Activated CD8-positive, alpha-beta T cell treated with anti-CD3 and anti-CD28 coated beads, Interleukin-2, amount 10 ng/mL, durations not matched to agents 7 days and 5 days (primary cell): ENCODE measurements at regions of chr9 and their contacts with region 1.

Region 1: GRCh38 chr9:124537926-124538325 is 30.7 kb upstream of the NR5A1 start:
- DNase-seq: no peak
- ATAC-seq: no peak
- H3K4me3 Mint-ChIP-seq: no peak overlapping the region
- H3K27ac Mint-ChIP-seq: no peak overlapping the region
- H3K4me1 Mint-ChIP-seq: no peaks in the 10 kb centered on the region
- H3K27me3 Mint-ChIP-seq: peaks cover 10% of the 10 kb centered on the region

Region 2: GRCh38 chr9:124420991-124421543 is 116.9 kb before region 1 on chr9:
- CTCF ChIA-PET with region 1: interaction called, 60 read pairs
- POLR2A ChIA-PET with region 1: no interaction called
- DNase-seq: peak; percentile 30
- ATAC-seq: peak; percentile 31
- H3K4me3 Mint-ChIP-seq: no peak overlapping the region
- H3K27ac Mint-ChIP-seq: no peak overlapping the region
- H3K4me1 Mint-ChIP-seq: peaks cover 13% of the 10 kb centered on the region
- H3K27me3 Mint-ChIP-seq: peaks cover 3% of the 10 kb centered on the region

Region 3: DNA sequence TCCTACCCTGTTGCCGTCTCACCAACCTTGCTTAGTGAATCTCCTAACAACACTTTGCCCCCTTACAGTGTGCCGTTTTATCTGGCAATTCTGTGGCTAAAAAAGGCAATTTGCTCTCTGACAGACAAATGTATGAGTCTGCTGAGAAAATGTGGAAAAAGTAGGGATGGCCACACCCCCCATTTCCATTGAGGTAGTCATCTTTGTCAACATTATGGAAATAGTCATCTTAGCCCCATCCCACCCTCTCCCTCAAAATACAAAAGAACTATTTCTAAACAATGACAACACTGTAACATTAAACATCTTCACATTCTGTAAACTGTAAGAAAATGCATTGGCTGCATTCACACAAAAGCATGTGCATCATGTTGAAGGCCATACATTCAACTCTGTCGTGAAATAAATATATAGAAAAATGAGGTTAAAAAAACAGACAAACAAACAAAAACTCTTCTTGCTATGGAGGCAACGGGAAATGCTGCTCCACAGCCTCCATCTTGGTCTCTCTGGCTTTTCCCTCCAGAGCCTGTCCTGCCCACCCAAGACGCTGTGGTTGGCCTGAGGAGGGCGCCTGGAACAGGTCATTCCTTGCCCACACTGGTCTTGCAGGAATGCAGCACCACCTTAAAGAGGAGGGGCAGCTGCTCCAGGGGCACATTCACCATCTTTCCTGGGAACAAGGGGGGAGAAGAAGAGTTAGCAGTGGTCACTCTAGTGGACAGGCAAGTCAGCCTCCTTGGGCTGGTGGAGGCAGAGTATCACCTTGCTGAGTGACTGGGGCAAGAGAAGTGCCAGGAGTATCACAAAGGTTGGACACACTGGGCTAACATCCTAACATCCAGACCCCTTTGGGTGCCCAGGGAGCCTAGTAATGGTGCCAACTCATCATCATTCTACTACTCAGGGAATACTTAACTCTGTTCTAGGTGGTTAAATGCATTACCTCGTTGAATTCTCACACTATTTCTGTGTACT is 15.5 kb before region 1 on chr9:
- CTCF ChIA-PET with region 1: interaction called, 15 read pairs
- POLR2A ChIA-PET with region 1: no interaction called
- DNase-seq: no peak
- ATAC-seq: no peak
- H3K4me3 Mint-ChIP-seq: no peak overlapping the region
- H3K27ac Mint-ChIP-seq: no peak overlapping the region
- H3K4me1 Mint-ChIP-seq: no peaks in the 10 kb centered on the region
- H3K27me3 Mint-ChIP-seq: peaks cover 7% of the 10 kb centered on the region

Region 4: DNA sequence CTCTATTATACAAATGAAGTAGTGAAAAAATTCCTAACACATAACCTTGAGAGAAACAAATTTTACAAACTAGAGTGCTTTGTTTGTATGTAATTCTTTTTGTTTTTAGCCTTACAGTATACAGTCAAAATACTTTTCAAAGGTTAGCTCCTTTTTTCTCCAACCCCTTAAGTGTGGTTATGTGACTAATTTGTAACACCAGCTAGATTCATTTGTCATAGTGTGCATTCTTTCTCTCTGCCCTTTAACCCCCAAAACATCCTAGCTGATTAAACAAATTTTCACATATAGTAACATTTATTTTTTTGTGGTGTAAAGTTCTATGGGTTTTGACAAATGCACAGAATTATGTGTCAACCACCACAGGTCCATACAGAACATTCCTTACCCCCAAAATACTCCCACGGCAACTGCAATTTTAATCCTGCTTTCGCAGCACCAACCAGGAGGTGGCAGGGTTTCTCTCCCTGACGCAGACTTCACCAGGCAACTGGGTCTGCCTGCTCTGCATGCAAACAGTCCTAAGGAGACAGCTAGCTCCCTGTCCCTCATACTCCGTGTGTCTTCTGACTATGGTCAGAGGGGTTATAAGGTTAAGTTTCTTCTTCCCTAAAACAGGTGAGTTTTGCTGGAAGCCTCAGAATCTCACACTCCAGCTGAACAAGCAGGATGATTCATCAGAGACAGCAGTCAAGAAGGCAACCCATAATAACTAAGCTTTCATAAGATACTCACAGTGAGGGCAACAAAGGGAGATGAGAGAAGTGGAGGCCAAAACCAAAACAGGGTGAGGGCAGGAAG is 13.7 kb after region 1 on chr9:
- CTCF ChIA-PET with region 1: interaction called, 32 read pairs
- POLR2A ChIA-PET with region 1: no interaction called
- DNase-seq: peak; percentile 47
- ATAC-seq: peak; percentile 78
- H3K4me3 Mint-ChIP-seq: no peak overlapping the region
- H3K27ac Mint-ChIP-seq: no peak overlapping the region
- H3K4me1 Mint-ChIP-seq: peaks cover 8% of the 10 kb centered on the region
- H3K27me3 Mint-ChIP-seq: peaks cover 6% of the 10 kb centered on the region

Region 5: GRCh38 chr9:124583128-124583527 is 45.2 kb after region 1 on chr9:
- CTCF ChIA-PET with region 1: no interaction called
- POLR2A ChIA-PET with region 1: no interaction called
- DNase-seq: no peak
- ATAC-seq: no peak
- H3K4me3 Mint-ChIP-seq: no peak overlapping the region
- H3K27ac Mint-ChIP-seq: no peak overlapping the region
- H3K4me1 Mint-ChIP-seq: no peaks in the 10 kb centered on the region
- H3K27me3 Mint-ChIP-seq: peaks cover 7% of the 10 kb centered on the region

Region 6: DNA sequence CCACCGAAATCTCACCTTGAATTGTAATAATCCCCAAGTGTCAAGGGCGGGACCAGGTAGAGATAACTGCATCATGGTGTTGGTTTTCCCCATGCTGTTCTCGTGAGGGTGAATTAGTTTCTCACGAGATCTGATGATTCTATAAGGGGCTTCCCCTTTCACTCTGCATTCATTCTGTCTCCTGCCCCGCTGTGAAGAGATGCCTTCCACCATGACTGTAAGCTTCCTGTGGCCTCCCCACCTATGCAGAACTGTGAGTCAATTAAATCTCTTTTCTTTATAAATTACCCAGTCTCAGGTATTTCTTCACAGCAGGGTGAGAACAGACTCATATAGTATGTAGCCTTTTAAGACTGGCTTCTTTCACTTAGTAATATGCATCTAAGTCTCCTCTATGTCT is 97.4 kb after region 1 on chr9:
- CTCF ChIA-PET with region 1: no interaction called
- POLR2A ChIA-PET with region 1: no interaction called
- DNase-seq: no peak
- ATAC-seq: no peak
- H3K4me3 Mint-ChIP-seq: no peak overlapping the region
- H3K27ac Mint-ChIP-seq: no peak overlapping the region
- H3K4me1 Mint-ChIP-seq: no peaks in the 10 kb centered on the region
- H3K27me3 Mint-ChIP-seq: peaks cover 41% of the 10 kb centered on the region